ENCODE measurements at regions of chr2 and their contacts with region 1.

Region 1: GRCh38 chr2:190880378-190881073 is at the start of gene GLS:
- DNase-seq: peak; percentile 98
- ATAC-seq: peak; percentile 81
- H3K4me3 Mint-ChIP-seq: peak within 1 kb of the TSS; percentile 79
- H3K27ac Mint-ChIP-seq: peak within 1 kb of the TSS; percentile 98
- H3K4me1 Mint-ChIP-seq: peaks cover 41% of the 10 kb centered on the region
- H3K27me3 Mint-ChIP-seq: no peaks in the 10 kb centered on the region
- total RNA-seq, gene GLS: 136 to 242 TPM

Region 2: GRCh38 chr2:190408538-190409271 is 471.8 kb before region 1 on chr2:
- CTCF ChIA-PET with region 1: no interaction called
- POLR2A ChIA-PET with region 1: interaction called, 3 read pairs
- intact Hi-C with region 1: loop called (anchors 2 to 5 kb)
- DNase-seq: peak; percentile 82
- ATAC-seq: peak; percentile 50
- H3K4me3 Mint-ChIP-seq: peak overlapping the region; percentile 81
- H3K27ac Mint-ChIP-seq: peak overlapping the region; percentile 90
- H3K4me1 Mint-ChIP-seq: peaks cover 45% of the 10 kb centered on the region
- H3K27me3 Mint-ChIP-seq: no peaks in the 10 kb centered on the region

Region 3: DNA sequence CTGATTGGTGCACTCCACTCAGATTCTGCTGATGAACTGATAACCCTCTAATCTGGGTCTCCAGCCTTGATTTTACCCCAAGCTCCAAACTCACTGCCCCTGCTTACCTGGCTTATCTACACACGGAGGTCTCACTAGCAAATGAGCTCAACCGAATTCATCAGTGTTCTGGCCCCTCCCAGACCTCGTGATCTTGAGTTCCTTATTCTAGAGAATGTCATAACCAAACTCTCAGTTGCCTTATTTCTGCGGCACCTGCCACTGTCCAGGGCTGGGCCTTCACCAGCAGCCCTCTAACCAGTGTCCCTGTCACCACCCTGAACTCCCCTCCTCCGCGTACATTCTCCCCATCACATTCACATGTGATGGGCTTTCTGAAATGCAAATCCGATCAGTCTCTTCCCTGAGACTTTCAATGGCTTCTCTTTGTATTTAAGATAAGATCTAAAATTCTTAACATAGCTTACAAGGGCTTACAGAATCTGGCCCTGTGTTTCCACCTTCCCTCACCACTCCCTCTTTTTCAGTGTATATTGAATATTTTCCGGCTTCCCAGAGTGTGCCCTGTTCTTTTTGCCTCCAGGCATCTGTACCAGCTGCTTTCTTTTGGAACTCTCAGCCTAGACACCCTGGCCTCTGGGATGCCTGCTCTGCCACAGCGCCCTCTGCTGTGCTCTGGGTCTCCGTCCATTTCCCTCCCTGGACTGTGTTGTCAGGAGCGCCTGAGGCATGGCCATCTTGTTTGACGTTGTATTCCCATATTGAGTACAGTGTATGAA is 200.5 kb before region 1 on chr2:
- CTCF ChIA-PET with region 1: no interaction called
- POLR2A ChIA-PET with region 1: interaction called, 26 read pairs
- intact Hi-C with region 1: loop called in 1 of 2 experiments (anchors 1 kb)
- DNase-seq: peak; percentile 75
- ATAC-seq: no peak
- H3K4me3 Mint-ChIP-seq: peak overlapping the region; percentile 36
- H3K27ac Mint-ChIP-seq: peak overlapping the region; percentile 97
- H3K4me1 Mint-ChIP-seq: peaks cover 56% of the 10 kb centered on the region
- H3K27me3 Mint-ChIP-seq: no peaks in the 10 kb centered on the region

Region 4: GRCh38 chr2:190863946-190864345 is 16.6 kb before region 1 on chr2:
- CTCF ChIA-PET with region 1: interaction called, 7 read pairs
- POLR2A ChIA-PET with region 1: interaction called, 5 read pairs
- intact Hi-C with region 1: loop called in 1 of 2 experiments (anchors 2 kb)
- DNase-seq: no peak
- ATAC-seq: no peak
- H3K4me3 Mint-ChIP-seq: no peak overlapping the region
- H3K27ac Mint-ChIP-seq: no peak overlapping the region
- H3K4me1 Mint-ChIP-seq: peaks cover 26% of the 10 kb centered on the region
- H3K27me3 Mint-ChIP-seq: no peaks in the 10 kb centered on the region

Region 5: DNA sequence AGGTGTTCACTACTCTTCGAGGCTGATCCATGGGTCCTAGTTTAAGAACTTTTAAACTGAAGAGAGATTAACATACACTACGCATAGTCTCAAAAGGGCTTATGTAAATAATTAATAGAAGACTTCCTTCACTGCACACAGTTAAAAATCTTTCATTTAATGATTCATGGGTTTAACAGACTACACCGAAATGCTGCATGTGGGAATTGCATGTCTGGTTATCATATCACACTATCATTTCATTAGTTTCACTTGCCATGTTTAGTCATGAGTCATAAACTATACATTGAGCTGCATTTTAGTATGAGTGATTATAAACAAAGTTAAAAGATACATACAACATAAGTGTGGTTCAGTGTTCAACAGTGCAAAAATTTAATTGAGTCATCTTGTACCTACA is 31.3 kb after region 1 on chr2:
- CTCF ChIA-PET with region 1: no interaction called
- POLR2A ChIA-PET with region 1: interaction called, 3 read pairs
- intact Hi-C with region 1: loop called (anchors 1 kb)
- DNase-seq: no peak
- ATAC-seq: peak; percentile 94
- H3K4me3 Mint-ChIP-seq: no peak overlapping the region
- H3K27ac Mint-ChIP-seq: peak overlapping the region; percentile 73
- H3K4me1 Mint-ChIP-seq: peaks cover 46% of the 10 kb centered on the region
- H3K27me3 Mint-ChIP-seq: no peaks in the 10 kb centered on the region

Region 6: GRCh38 chr2:191189112-191189635 is 308.6 kb after region 1 on chr2:
- CTCF ChIA-PET with region 1: no interaction called
- POLR2A ChIA-PET with region 1: no interaction called
- intact Hi-C with region 1: loop called in 1 of 2 experiments (anchors 1 kb)
- DNase-seq: no peak
- ATAC-seq: no peak
- H3K4me3 Mint-ChIP-seq: peak overlapping the region; percentile 19
- H3K27ac Mint-ChIP-seq: peak overlapping the region; percentile 68
- H3K4me1 Mint-ChIP-seq: peaks cover 63% of the 10 kb centered on the region
- H3K27me3 Mint-ChIP-seq: no peaks in the 10 kb centered on the region